Mammary epithelial cell (primary cell): ENCODE measurements at regions of chr13 and their contacts with region 1.

Region 1: DNA sequence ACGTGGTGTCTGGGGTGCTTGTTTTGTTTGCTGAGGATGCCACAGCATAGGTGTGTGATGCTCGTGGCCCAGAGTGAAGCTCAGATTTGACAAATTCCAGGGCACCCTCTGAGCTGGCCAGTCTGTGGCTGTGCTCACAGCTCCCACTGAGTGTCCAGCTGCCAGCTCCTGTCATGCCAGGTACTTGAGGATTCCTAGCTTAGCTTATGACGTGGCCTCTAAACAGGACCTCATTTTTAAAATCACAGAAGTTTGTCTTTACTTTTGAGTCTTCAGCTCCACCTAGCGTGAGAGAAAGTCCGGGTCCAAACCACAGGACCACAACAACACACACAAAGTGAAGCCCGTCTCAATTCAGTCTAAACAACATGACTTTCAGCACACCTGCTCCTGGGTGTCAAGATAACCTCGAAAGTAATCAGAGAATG is 117.3 kb downstream of the RAB20 start:
- DNase-seq: peak; percentile 54
- H3K4me3 ChIP-seq: no peak overlapping the region
- H3K27ac ChIP-seq: no peak overlapping the region
- H3K4me1 ChIP-seq: peaks cover 66% of the 10 kb centered on the region
- H3K27me3 ChIP-seq: no peaks in the 10 kb centered on the region
- CTCF ChIP-seq: peak; percentile 20 to 47

Region 2: DNA sequence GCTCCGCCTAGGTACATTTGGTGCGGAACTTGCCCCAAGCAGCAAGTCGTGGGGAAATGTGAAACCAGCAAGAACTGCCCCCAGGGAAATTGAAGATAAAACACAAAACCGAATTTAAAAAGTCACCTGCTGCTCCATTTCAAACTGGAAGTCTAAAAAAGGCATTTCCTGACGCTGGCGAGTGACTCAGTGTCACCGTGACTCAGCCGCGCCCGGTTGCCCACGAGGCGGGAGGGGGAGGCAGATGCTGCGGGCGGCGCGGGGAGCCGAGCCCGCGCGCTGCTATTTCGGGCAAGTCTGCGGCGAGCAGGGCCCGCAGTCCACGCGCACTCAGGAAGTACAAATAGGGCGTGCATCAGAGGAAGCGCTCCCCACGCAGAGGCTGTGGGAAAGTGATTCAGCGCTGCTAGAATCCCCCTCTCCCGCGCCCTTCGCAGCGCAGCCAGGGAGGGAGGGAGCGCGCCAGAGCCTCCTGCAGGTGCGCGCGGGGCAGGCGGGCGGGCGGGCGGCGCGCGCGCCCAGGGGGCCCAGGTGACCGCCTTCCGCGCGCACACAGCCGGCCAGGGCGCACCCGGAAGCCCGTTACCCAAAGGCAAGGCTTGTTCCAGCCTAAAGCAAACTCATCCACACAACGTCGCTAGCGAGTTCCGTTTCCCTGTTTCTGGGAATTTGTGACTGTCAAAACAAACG is 306.1 kb before region 1 on chr13:
- CTCF ChIA-PET with region 1: no interaction called
- dilution Hi-C with region 1: no loop called
- in situ Hi-C with region 1: no loop called
- intact Hi-C with region 1: loop called (anchors 10 kb)
- DNase-seq: peak; percentile 82
- H3K4me3 ChIP-seq: peak overlapping the region; percentile 37 to 68 (median 52)
- H3K27ac ChIP-seq: peak overlapping the region; percentile 48
- H3K4me1 ChIP-seq: peaks cover 19% of the 10 kb centered on the region
- H3K27me3 ChIP-seq: no peaks in the 10 kb centered on the region
- CTCF ChIP-seq: peak; percentile 9 to 25

Region 3: DNA sequence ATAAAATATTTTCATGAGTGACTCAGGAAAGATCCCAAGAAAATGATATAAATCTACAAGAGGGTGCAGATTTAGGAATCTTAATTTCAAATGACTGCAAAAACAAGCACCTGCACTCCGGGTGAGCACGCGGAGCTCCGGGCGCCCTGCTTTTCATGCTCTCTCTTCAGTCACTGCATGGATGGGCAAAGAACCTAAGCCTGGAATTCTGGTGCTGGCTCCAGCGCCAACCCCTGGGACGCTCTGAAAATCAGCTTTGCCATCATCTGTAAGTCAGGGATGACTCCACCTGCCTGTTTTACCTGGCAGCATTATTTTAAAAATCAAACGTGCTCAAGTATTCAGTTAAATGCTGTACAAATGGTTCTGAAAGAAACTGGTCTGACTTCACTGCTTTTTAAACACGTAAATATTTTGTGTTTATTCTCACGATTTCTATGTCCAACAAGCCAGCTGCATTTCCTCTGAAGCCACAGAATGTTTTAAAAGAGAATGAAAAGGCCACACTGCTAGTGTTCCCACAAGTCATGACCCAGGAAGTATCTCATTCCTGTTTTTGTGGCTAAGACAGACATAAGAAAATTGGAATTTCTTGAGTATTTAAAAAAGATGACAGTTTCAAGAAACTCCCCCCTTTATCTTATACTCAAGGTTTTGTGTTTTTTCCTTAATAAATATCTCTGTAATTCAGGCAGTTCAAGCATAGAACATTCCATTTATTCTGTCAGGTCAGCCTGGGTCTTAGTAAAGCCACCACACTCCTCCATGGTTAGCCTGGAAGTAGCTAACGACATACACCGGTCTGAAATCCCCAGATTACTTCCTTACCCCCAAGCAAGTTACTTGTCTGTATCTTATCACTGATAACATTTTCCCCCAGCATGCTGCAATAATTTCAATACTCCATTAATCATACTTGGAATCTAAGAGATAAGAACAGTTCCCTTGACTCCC is 218.4 kb before region 1 on chr13:
- CTCF ChIA-PET with region 1: interaction called, 5 read pairs
- dilution Hi-C with region 1: no loop called
- in situ Hi-C with region 1: no loop called
- intact Hi-C with region 1: loop called (anchors 1 kb)
- DNase-seq: no peak
- H3K4me3 ChIP-seq: no peak overlapping the region
- H3K27ac ChIP-seq: no peak overlapping the region
- H3K4me1 ChIP-seq: peaks cover 6% of the 10 kb centered on the region
- H3K27me3 ChIP-seq: no peaks in the 10 kb centered on the region
- CTCF ChIP-seq: no peak

Region 4: GRCh38 chr13:110340812-110341444 is 103.3 kb before region 1 on chr13:
- CTCF ChIA-PET with region 1: no interaction called
- dilution Hi-C with region 1: no loop called
- in situ Hi-C with region 1: no loop called
- intact Hi-C with region 1: loop called (anchors 1 kb)
- DNase-seq: peak; percentile 53
- H3K4me3 ChIP-seq: no peak overlapping the region
- H3K27ac ChIP-seq: peak overlapping the region; percentile 51
- H3K4me1 ChIP-seq: peaks cover 52% of the 10 kb centered on the region
- H3K27me3 ChIP-seq: no peaks in the 10 kb centered on the region
- CTCF ChIP-seq: no peak

Region 5: GRCh38 chr13:110396913-110397381 is 47.3 kb before region 1 on chr13:
- CTCF ChIA-PET with region 1: no interaction called
- dilution Hi-C with region 1: loop called (anchors 5 kb)
- in situ Hi-C with region 1: no loop called
- intact Hi-C with region 1: no loop called
- DNase-seq: peak; percentile 97
- H3K4me3 ChIP-seq: peak overlapping the region; percentile 7 to 16 (median 11)
- H3K27ac ChIP-seq: peak overlapping the region; percentile 81
- H3K4me1 ChIP-seq: peaks cover 24% of the 10 kb centered on the region
- H3K27me3 ChIP-seq: no peaks in the 10 kb centered on the region
- CTCF ChIP-seq: no peak